ENCODE measurements at regions of chr21 and their contacts with region 1.

Region 1: DNA sequence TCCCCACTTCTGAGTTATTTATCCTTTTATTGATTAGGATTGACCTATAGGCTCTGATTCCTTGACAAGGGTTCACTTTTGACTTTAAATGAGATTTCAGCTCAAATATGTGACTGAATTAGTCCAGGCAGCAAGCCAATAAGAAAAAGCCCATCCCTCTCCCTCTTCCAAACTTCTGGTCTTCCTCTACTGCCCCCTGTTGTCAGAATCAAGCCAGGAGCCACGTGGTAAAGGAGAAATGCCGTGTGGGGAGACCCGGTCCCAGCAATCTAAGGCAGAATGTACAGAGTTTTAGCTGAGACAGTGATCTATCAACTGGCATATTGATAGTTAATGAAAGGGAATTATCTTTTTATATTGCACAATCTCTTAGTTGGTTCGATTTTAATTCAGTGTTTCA is 5.2 kb downstream of the ADAMTS5 start:
- H3K4me3 ChIP-seq: no peak overlapping the region
- H3K27ac ChIP-seq: no peak overlapping the region
- H3K4me1 ChIP-seq: peaks cover 3% of the 10 kb centered on the region; the same call in 1 of the 2 replicates
- CTCF ChIP-seq: no peak

Region 2: DNA sequence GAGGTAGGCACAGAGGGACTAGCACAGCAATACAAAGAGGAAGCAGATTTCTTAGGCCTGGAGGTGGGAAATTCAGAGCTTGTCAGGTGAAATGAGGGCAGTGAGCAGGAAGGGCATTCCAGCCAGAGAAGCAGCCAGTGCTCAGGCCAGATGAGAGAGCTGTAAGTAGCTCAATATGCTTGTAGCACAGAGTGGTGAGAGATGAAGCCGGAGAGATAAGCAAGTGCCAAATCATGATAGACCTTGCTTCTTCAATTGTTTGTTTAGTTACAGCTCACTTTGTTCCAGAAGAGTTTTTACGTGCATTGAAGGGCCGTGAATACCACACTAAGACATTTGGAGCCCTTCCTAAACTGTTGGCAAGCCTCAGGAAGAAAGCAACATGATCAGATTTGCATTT is 74.4 kb before region 1 on chr21:
- CTCF ChIA-PET with region 1: interaction called, 14 read pairs
- POLR2A ChIA-PET with region 1: no interaction called
- H3K4me3 ChIP-seq: no peak overlapping the region
- H3K27ac ChIP-seq: no peak overlapping the region
- H3K4me1 ChIP-seq: no peaks in the 10 kb centered on the region
- CTCF ChIP-seq: no peak

Region 3: DNA sequence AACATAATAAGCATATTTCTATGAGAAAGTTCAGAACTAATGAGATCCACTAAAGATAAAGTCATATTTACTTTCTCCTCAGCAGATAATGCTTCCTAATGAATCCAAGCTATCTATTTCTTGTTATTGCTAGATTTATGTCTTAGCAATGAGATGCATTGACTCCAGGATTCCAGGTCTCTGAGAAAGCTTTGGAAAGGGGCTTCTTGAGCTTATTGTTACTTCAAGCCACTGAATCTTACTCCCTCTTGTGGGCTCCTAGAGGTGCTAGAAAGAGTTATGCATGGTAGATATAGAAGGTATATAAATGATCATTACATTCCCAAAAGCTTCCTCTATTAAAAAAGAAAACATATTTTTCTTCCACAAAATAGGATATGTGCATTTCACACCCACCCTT is 251.6 kb after region 1 on chr21:
- CTCF ChIA-PET with region 1: interaction called, 13 read pairs
- POLR2A ChIA-PET with region 1: interaction called, 3 read pairs
- H3K4me3 ChIP-seq: no peak overlapping the region
- H3K27ac ChIP-seq: no peak overlapping the region
- H3K4me1 ChIP-seq: 0 out of 2 replicates have a peak, but pooled peaks cover 3% of the 10 kb centered on the region
- CTCF ChIP-seq: no peak